Activated CD4-positive, alpha-beta T cell treated with anti-CD3 and anti-CD28 coated beads, Interleukin-2, amount 10 ng/mL, durations not matched to agents 24 days and 14 days (primary cell): ENCODE measurements at regions of chr12 and their contacts with region 1.

Region 1: GRCh38 chr12:110048242-110049027 is at the start of gene C12orf76:
- DNase-seq: peak; percentile 98
- H3K4me3 Mint-ChIP-seq: peak within 1 kb of the TSS; percentile 87
- H3K27ac Mint-ChIP-seq: peak within 1 kb of the TSS; percentile 96
- H3K4me1 Mint-ChIP-seq: peaks cover 23% of the 10 kb centered on the region
- H3K27me3 Mint-ChIP-seq: no peaks in the 10 kb centered on the region
- total RNA-seq, gene C12orf76: 21.3 and 25.1 TPM in 2 replicates

Region 2: DNA sequence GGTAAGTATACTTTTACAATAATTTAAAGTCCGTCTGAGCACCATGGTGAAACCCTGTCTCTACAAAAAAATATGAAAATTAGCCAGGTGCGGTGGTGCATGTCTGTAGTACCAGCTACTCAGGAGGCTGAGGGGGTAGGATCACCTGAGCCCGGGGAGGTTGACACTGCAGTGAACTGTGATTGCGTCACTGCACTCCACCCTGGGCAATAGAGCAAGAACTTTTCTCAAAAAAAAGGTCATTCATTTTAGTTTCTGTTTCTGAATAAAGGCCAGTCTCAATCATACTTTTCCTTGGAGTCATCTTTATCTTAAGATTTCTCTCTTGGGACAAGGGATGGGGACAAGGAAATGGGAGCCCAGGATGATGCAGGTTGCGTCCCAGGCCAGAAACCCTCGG is 36.3 kb before region 1 on chr12:
- intact Hi-C with region 1: no loop called
- DNase-seq: no peak
- H3K4me3 Mint-ChIP-seq: no peak overlapping the region
- H3K27ac Mint-ChIP-seq: peak overlapping the region; percentile 38
- H3K4me1 Mint-ChIP-seq: peaks cover 49% of the 10 kb centered on the region
- H3K27me3 Mint-ChIP-seq: no peaks in the 10 kb centered on the region

Region 3: DNA sequence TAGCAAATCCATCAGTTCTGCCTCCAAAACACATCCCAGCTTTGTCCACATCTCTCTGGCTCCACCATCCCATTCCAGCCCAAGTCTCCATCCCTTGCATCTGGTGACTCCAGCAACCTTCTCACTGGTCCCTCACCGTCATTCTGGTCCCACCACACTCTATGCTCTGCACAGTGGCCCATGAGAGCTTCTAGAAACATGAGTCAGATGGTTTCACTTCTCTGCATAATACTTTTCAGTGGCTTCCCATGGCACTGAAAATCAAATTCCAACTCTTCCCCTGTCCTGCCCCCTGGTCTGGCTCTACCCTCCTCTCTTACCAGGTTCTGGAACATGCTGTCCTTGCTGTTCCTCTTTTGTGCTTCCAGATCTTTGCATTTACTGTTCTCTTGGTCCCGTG is 17.1 kb after region 1 on chr12:
- intact Hi-C with region 1: loop called (anchors 2 kb)
- DNase-seq: no peak
- H3K4me3 Mint-ChIP-seq: no peak overlapping the region
- H3K27ac Mint-ChIP-seq: no peak overlapping the region
- H3K4me1 Mint-ChIP-seq: peaks cover 30% of the 10 kb centered on the region
- H3K27me3 Mint-ChIP-seq: no peaks in the 10 kb centered on the region

Region 4: GRCh38 chr12:110079477-110080400 is 31.3 kb after region 1 on chr12:
- intact Hi-C with region 1: loop called (anchors 1 kb)
- DNase-seq: peak; percentile 93
- H3K4me3 Mint-ChIP-seq: peak overlapping the region; percentile 72
- H3K27ac Mint-ChIP-seq: peak overlapping the region; percentile 95
- H3K4me1 Mint-ChIP-seq: peaks cover 35% of the 10 kb centered on the region
- H3K27me3 Mint-ChIP-seq: no peaks in the 10 kb centered on the region

Region 5: DNA sequence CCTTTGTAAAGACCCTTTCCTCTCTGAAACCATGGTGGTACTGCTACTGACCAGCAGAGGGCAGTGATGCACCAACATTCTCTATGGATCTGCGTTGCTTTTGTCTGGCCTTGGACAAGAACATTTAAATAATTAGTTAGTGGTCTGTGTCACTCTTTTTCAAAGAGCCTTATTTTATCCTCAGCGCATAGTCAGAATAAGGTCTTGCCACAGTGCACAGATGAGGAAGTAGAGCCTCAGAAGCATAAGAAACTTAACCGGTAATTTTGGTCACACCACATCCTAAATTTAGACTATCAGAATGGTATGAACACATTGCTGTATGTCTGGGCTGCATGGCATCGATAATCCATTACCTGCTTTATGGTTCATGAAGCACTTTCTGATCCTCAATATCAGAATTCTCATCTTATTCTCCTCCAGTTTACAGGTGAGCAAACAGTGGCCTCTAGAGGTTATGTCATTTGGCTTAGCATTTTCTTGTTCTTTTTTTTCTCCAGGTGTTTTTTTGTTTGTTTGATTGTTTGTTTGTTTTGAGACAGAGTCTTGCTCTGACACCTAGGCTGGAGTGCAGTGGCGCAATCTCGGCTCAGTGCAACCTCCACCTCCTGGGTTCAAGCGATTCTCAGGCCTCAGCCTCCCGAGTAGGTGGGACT is 52.0 kb after region 1 on chr12:
- intact Hi-C with region 1: loop called (anchors 1 kb)
- DNase-seq: peak; percentile 89
- H3K4me3 Mint-ChIP-seq: peak overlapping the region; percentile 0
- H3K27ac Mint-ChIP-seq: peak overlapping the region; percentile 36
- H3K4me1 Mint-ChIP-seq: peaks cover 12% of the 10 kb centered on the region
- H3K27me3 Mint-ChIP-seq: no peaks in the 10 kb centered on the region

Region 6: GRCh38 chr12:110124184-110124995 is 76.0 kb after region 1 on chr12 and contains the start of gene IFT81:
- intact Hi-C with region 1: loop called (anchors 2 kb)
- DNase-seq: peak; percentile 99
- H3K4me3 Mint-ChIP-seq: peak within 1 kb of the TSS; percentile 86
- H3K27ac Mint-ChIP-seq: peak within 1 kb of the TSS; percentile 85
- H3K4me1 Mint-ChIP-seq: peaks cover 9% of the 10 kb centered on the region
- H3K27me3 Mint-ChIP-seq: peaks cover 33% of the 10 kb centered on the region
- total RNA-seq, gene IFT81: 1.5 and 1.6 TPM in 2 replicates

Region 7: GRCh38 chr12:110234755-110235154 is 186.3 kb after region 1 on chr12:
- intact Hi-C with region 1: no loop called
- DNase-seq: no peak
- H3K4me3 Mint-ChIP-seq: no peak overlapping the region
- H3K27ac Mint-ChIP-seq: no peak overlapping the region
- H3K4me1 Mint-ChIP-seq: no peaks in the 10 kb centered on the region
- H3K27me3 Mint-ChIP-seq: peaks cover 31% of the 10 kb centered on the region